SK-N-SH (cell line): ENCODE measurements at regions of chr7 and their contacts with region 1.

Region 1: GRCh38 chr7:100705753-100706671 is at the start of gene POP7:
- DNase-seq: peak; percentile 99
- H3K4me3 ChIP-seq: peak within 1 kb of the TSS; percentile 62 to 92
- H3K27ac ChIP-seq: peak within 1 kb of the TSS; percentile 85 to 89
- H3K4me1 ChIP-seq: peaks cover 6 to 14% of the 10 kb centered on the region in 2 experiments; a peak in 2 of 4 replicates
- H3K27me3 ChIP-seq: peaks cover 3% of the 10 kb centered on the region; the same call in 1 of the 2 replicates
- CTCF ChIP-seq: no peak
- EP300 ChIP-seq: no peak
- RAD21 ChIP-seq: no peak
- polyA plus RNA-seq, gene POP7: 63.8 and 81.8 TPM in 2 replicates

Region 2: GRCh38 chr7:100407285-100408180 is 298.5 kb before region 1 on chr7:
- CTCF ChIA-PET with region 1: no interaction called
- POLR2A ChIA-PET with region 1: no interaction called
- DNase-seq: peak; percentile 75
- H3K4me3 ChIP-seq: no peak overlapping the region
- H3K27ac ChIP-seq: no peak overlapping the region
- H3K4me1 ChIP-seq: no peaks in the 10 kb centered on the region
- H3K27me3 ChIP-seq: no peaks in the 10 kb centered on the region
- CTCF ChIP-seq: peak; percentile 90
- EP300 ChIP-seq: no peak
- RAD21 ChIP-seq: peak; percentile 81

Region 3: DNA sequence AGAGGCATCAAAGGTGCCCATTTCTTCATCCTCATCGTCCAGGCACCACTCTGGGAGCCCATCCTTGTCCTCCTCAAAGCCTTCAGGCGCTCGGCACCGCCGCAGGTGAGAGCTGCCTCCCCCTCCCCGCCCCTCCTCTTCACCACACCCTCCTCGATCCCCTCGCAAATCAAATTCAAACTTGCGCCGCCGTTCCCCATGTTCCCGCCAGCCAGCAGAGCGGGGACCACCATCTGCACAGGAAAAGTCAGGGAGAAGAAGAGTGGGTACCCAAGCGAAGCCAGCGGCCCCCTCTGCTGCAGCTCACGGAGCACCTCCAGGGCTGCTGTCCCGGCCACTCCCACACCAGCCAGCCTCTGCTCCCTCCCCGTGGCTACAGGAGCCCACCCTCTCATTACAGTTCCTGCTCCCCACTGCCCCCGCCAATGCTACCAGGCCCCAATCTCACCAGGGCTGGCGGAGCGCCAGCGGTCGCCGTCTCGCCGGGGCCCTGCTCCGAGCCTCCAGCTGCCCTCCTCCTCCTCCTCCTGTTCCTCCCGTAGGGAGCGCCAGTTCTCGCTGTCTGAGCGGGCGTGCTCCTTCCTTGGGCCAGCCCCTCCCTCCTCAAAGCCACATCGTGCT is 19.7 kb before region 1 on chr7:
- CTCF ChIA-PET with region 1: interaction called, 147 read pairs
- POLR2A ChIA-PET with region 1: interaction called, 3 read pairs
- DNase-seq: peak; percentile 41
- H3K4me3 ChIP-seq: no peak overlapping the region
- H3K27ac ChIP-seq: no peak overlapping the region; a peak in 1 of 4 replicates
- H3K4me1 ChIP-seq: peaks cover 2 to 6% of the 10 kb centered on the region in 2 experiments; a peak in 1 of 4 replicates
- H3K27me3 ChIP-seq: no peaks in the 10 kb centered on the region
- CTCF ChIP-seq: no peak
- EP300 ChIP-seq: no peak
- RAD21 ChIP-seq: no peak

Region 4: DNA sequence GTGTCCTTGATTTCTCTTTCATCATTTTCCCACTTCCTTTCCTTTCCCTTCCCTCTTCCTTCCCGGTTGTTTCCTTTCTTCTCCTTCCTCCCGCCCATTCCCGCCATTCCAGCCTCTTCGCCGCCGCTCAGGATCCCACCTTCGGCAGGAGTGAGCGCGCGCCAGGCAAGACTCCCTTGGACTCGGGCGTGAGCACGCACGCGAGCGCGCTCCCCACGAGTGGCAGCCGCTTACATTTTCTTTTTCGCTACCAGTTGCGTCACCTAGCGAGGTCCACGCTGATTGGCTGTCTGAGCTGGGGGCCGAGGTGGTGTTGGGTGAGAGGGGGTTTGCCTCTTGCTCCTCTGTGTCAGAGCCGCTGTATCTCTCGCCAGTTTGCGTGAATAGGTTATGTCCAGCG is 39.2 kb after region 1 on chr7:
- CTCF ChIA-PET with region 1: interaction called, 10 read pairs
- POLR2A ChIA-PET with region 1: no interaction called
- DNase-seq: peak; percentile 82
- H3K4me3 ChIP-seq: peak overlapping the region; percentile 34 to 50; a peak in 3 of 4 replicates
- H3K27ac ChIP-seq: no peak overlapping the region
- H3K4me1 ChIP-seq: no peaks in the 10 kb centered on the region
- H3K27me3 ChIP-seq: peaks cover 22% of the 10 kb centered on the region
- CTCF ChIP-seq: no peak
- EP300 ChIP-seq: no peak
- RAD21 ChIP-seq: no peak

Region 5: DNA sequence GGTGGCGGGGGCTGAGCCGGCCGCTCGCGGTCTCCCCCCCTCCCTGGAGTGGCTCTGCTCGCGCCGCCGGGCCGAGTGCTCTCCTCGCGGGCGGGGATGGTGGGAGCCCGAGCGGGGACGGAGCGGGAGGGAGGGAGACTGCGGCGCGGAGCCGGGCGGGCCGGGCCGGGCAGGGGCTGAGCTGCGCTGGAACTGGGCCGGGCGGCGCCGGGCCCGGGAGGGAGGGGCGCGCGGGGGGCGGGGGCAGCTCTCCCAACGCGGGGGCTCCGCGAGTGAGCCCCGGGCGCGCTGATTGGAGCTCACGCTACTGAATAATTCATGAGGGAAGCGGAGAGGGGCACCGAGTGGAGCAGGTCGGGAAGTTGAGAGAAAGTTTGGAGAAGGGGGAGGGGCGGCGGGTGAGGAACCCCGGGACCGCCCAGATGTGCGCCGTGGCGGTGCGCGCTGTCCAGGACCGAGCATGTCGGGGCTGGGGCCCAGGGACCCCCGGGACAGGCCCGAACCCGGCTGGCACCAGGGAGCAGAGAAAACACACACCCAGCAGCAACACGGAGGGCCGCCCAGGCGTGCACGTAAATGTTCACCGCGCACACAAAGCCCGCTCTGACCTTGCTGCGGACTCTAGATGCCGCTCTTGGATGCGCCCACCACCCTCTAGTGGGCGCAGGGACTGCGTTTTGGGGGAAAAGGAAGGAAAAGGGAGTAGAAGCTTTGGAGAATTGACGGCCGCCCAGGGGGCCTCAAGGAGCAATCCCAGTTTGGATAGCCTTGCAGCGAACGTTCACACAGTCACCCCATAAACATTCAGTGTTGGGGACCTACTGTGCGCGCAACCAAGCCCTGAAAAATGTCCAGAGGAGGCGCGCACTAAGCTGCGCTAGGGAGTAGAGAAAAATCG is 121.6 kb after region 1 on chr7 and contains the start of gene EPHB4:
- CTCF ChIA-PET with region 1: interaction called, 18 read pairs
- POLR2A ChIA-PET with region 1: interaction called, 8 read pairs
- DNase-seq: peak; percentile 88
- H3K4me3 ChIP-seq: peak within 1 kb of the TSS; percentile 65 to 78
- H3K27ac ChIP-seq: peak within 1 kb of the TSS; percentile 17 to 35
- H3K4me1 ChIP-seq: peaks cover 6 to 22% of the 10 kb centered on the region in 2 experiments; a peak in 2 of 4 replicates
- H3K27me3 ChIP-seq: no peaks in the 10 kb centered on the region
- CTCF ChIP-seq: peak; percentile 76
- EP300 ChIP-seq: no peak
- RAD21 ChIP-seq: peak; percentile 55
- polyA plus RNA-seq, gene EPHB4: 51.1 and 64.4 TPM in 2 replicates

Region 6: DNA sequence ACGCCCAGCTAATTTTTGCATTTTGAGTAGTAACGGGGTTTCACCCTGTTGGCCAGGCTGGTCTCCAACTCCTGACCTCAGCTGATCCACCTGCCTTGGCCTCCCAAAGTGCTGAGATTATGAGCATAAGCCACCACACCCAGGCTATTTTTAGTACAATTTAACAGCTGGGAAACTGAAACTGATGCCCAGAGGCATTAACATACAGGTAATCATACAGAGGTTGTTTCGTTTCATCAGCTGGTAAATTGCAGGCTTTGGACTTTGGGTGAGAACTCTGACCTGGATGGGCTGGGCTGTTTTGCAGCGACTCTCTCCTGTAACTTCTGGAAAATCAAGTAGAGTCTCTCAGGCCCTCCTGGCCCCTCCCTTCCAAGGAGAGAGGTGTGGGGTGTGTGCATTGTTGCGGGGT is 195.9 kb after region 1 on chr7:
- CTCF ChIA-PET with region 1: no interaction called
- POLR2A ChIA-PET with region 1: no interaction called
- DNase-seq: no peak
- H3K4me3 ChIP-seq: no peak overlapping the region
- H3K27ac ChIP-seq: no peak overlapping the region
- H3K4me1 ChIP-seq: peaks cover 0 to 2% of the 10 kb centered on the region in 2 experiments; a peak in 1 of 4 replicates
- H3K27me3 ChIP-seq: peaks cover 61% of the 10 kb centered on the region
- CTCF ChIP-seq: no peak
- EP300 ChIP-seq: no peak
- RAD21 ChIP-seq: no peak

Region 7: DNA sequence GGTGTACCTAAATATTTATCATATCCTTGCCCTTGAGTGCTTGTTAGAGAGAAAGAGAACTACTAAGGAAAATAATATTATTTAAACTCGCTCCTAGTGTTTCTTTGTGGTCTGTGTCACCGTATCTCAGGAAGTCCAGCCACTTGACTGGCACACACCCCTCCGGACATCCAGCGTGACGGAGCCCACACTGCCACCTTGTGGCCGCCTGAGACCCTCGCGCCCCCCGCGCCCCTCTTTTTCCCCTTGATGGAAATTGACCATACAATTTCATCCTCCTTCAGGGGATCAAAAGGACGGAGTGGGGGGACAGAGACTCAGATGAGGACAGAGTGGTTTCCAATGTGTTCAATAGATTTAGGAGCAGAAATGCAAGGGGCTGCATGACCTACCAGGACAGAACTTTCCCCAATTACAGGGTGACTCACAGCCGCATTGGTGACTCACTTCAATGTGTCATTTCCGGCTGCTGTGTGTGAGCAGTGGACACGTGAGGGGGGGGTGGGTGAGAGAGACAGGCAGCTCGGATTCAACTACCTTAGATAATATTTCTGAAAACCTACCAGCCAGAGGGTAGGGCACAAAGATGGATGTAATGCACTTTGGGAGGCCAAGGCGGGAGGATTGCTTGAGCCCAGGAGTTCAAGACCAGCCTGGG is 432.3 kb after region 1 on chr7:
- CTCF ChIA-PET with region 1: no interaction called
- POLR2A ChIA-PET with region 1: no interaction called
- DNase-seq: peak; percentile 88
- H3K4me3 ChIP-seq: peak overlapping the region; percentile 3 to 4; a peak in 2 of 4 replicates
- H3K27ac ChIP-seq: peak overlapping the region; percentile 71 to 98
- H3K4me1 ChIP-seq: peaks cover 11 to 24% of the 10 kb centered on the region in 2 experiments; a peak in 3 of 4 replicates
- H3K27me3 ChIP-seq: no peaks in the 10 kb centered on the region
- CTCF ChIP-seq: peak; percentile 99
- EP300 ChIP-seq: peak; percentile 75 to 98
- RAD21 ChIP-seq: peak; percentile 63

Region 8: DNA sequence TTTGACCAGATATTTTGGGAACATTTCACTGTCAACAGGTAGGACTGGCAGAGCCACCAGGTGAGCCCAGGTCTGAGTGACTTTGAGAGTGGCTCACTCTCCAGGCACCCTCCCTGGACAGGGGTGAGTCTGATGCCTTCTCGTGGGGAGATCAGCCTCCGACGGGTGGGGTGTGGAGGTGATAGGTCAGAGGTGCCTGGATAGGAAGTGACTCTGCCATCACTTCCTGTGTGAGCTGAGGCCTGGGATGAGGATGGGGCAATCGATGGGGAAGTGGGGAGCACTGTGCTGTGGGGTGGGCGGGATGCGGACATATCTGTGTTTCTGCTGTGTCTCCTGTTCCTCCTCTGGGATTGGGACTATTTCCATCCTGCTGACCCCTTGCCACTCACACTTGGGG is 581.0 kb after region 1 on chr7:
- CTCF ChIA-PET with region 1: no interaction called
- POLR2A ChIA-PET with region 1: no interaction called
- DNase-seq: no peak
- H3K4me3 ChIP-seq: no peak overlapping the region
- H3K27ac ChIP-seq: no peak overlapping the region
- H3K4me1 ChIP-seq: peaks cover 0 to 2% of the 10 kb centered on the region in 2 experiments; a peak in 1 of 4 replicates
- H3K27me3 ChIP-seq: peaks cover 23% of the 10 kb centered on the region
- CTCF ChIP-seq: no peak
- EP300 ChIP-seq: no peak
- RAD21 ChIP-seq: no peak